Calu3 (cell line): ENCODE measurements at regions of chr9 and their contacts with region 1.

Region 1: GRCh38 chr9:33040792-33041431 is 15.8 kb downstream of the DNAJA1 start:
- DNase-seq: no peak
- H3K4me3 Mint-ChIP-seq: no peak overlapping the region
- H3K27ac Mint-ChIP-seq: no peak overlapping the region
- H3K4me1 Mint-ChIP-seq: peaks cover 30% of the 10 kb centered on the region
- H3K27me3 Mint-ChIP-seq: no peaks in the 10 kb centered on the region
- CTCF ChIP-seq: no peak

Region 2: DNA sequence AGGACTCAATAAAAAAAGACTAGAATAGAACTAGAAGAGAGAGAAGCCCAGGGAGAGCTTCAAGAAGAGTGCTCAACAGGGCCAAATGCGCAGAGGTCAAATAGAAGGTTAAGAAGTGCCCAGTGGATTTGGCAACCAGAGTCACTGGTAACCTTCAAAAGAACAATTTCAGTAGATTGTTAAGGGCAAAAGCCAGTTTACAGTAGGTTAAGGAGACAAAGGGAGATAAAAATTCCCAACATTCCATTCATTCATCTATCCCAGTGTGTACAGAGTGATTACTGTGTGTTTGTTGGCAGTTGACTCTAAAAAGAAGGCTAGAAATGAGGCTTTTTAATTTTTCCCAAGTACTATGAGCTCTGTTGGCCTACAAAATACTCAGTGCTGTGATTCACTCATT is 584.3 kb before region 1 on chr9:
- CTCF ChIA-PET with region 1: interaction called, 11 read pairs
- intact Hi-C with region 1: no loop called
- DNase-seq: no peak
- H3K4me3 Mint-ChIP-seq: no peak overlapping the region
- H3K27ac Mint-ChIP-seq: no peak overlapping the region
- H3K4me1 Mint-ChIP-seq: no peaks in the 10 kb centered on the region
- H3K27me3 Mint-ChIP-seq: no peaks in the 10 kb centered on the region
- CTCF ChIP-seq: no peak